ENCODE measurements at regions of chr1 and their contacts with region 1.

Region 1: DNA sequence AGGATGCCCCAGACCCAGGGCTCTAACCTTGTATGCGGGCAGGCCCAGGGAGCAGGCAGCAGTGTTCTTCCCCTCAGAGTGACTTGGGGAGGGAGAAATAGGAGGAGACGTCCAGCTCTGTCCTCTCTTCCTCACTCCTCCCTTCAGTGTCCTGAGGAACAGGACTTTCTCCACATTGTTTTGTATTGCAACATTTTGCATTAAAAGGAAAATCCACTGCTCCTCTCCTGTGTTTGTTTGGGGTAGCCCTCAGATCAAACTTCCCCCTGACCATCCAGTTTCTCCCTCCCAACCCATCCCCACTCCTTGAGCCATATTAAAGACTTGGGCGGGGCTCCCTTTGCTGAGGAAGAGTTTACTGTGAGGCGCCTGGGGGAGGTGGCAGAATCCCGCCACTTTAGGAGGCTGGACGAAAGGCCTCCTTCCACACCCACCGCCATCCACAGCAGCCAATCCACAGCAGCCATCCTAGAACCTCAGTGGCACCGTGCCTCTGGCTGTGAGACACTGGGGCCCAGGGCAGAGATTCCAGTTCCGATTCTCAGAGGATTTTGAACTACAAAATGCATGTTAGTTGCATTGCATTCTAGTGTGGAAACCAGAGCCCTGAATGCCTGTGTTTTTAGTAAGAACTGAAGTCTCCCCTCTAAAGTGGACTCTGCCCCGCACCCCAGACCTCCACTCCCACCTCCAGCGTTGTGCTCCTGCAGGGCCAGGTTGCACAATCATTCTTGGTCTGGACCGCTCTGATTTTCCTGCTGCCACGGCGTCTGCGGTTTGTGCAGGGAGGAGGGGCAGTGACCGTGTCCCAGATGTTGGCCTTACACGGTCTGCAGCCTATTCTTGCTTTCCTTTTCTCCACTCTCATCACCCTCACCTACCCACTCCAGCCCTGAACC is 3.0 kb downstream of the OLFML3 start:
- DNase-seq: peak in 1 of 2 experiments; percentile 57
- H3K4me3 ChIP-seq: no peak overlapping the region
- H3K4me1 ChIP-seq: peaks cover 20% of the 10 kb centered on the region
- H3K27me3 ChIP-seq: no peaks in the 10 kb centered on the region

Region 2: GRCh38 chr1:113721010-113721409 is 261.3 kb before region 1 on chr1:
- in situ Hi-C with region 1: no loop called
- DNase-seq: no peak
- H3K4me3 ChIP-seq: no peak overlapping the region
- H3K4me1 ChIP-seq: no peaks in the 10 kb centered on the region
- H3K27me3 ChIP-seq: no peaks in the 10 kb centered on the region

Region 3: DNA sequence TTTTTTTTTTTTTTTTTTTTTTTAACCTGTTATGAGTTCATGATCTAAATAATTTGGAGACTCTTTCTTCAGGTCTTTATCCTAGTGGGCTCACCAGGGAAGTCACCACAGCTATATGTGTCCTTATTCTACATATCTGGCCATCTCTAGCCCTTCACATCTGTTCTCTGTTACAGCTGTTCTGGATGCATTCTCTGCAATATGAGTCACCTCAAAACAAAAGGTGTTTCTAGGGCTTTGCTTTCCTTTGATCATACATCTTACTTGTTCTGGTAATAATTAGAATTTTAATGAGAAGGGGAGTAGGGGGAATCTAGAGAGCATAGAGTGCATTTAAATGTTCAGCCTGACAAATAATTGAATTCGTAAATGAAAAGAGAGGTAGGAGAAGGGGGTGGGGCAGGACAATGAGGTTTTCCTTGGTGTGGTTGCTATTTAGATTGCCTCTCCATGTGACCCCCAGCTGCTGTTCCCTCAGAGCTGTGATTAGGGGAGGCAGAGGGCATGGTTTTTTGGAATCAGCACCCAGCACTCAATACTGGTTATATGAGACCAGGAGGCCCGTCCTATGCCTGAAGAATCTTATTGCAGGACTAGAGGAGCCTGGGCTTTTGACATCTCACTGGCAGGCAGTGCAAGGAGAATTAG is 163.3 kb after region 1 on chr1:
- in situ Hi-C with region 1: no loop called
- DNase-seq: no peak
- H3K4me3 ChIP-seq: no peak overlapping the region
- H3K4me1 ChIP-seq: peaks cover 6% of the 10 kb centered on the region; the same call in 1 of the 2 replicates
- H3K27me3 ChIP-seq: no peaks in the 10 kb centered on the region

Region 4: DNA sequence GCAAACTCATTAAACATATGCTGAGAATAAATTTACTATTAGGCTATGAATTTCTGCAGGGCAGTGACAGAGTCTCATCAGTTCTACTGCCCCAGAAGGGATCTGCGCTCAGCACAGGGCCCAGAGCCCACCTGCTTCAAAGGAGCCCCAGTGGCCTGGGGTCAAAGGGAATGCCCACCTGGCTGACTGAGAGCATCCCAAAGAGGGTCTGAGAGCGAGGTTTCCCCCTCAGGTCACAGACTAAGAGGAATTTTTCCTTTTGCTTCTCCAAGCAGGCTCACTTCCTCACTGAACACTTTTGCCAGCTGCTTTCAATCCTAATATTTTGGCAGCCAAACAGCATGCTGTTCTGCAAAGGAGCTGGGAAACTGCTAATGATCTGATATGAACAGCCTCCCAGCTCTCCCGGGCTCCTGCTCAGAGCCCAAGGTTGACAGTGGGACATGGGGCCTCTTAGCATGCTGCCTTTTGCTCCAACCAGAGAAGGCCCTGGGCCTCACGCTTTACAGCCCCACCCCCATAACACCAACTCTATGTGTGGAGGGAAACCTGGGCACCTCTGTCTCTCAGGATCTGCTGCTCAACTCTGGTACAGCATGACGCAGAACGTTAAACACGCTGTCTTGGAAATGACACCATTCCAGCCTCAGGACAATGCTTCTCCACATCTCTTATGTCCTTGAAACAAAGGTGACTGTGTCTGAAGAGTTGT is 242.1 kb after region 1 on chr1:
- in situ Hi-C with region 1: loop called (anchors 10 kb)
- DNase-seq: no peak
- H3K4me3 ChIP-seq: no peak overlapping the region
- H3K4me1 ChIP-seq: no peaks in the 10 kb centered on the region
- H3K27me3 ChIP-seq: 0 out of 2 replicates have a peak, but pooled peaks cover 2% of the 10 kb centered on the region

Region 5: DNA sequence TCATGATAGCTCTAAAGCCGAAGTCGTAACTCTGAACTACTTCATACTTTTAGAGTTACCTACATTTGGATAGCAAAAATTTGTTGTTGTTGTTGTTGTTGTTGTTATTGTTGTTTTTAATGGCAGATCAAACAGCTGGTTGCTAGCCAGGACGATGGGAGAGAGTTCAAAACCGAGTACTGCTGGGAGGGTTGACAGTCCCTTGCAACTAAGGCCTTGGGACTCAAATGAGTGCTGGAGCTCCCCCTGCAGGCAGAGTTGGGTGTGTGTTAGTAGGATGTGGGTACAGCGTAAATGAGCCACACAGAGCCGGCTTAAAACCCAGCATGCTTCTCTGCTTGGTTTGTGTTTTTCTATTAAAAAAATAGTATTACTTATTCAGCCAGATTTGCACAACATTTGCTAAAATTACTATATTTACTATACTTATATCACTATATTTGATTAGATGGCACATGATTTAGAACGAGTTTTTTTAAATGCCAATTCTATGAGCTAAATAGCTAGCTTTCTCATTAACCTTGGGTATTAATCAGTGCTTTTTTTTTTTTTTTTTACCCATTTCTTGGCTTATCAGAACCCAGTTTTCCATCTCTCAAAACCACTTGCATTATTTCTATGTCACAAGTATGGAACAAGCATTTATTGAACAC is 300.6 kb after region 1 on chr1:
- in situ Hi-C with region 1: loop called (anchors 5 kb)
- DNase-seq: peak; percentile 73 to 92
- H3K4me3 ChIP-seq: no peak overlapping the region
- H3K4me1 ChIP-seq: 0 out of 2 replicates have a peak, but pooled peaks cover 6% of the 10 kb centered on the region
- H3K27me3 ChIP-seq: peaks cover 6% of the 10 kb centered on the region